ENCODE measurements at regions of chr11 and their contacts with region 1.

Region 1: DNA sequence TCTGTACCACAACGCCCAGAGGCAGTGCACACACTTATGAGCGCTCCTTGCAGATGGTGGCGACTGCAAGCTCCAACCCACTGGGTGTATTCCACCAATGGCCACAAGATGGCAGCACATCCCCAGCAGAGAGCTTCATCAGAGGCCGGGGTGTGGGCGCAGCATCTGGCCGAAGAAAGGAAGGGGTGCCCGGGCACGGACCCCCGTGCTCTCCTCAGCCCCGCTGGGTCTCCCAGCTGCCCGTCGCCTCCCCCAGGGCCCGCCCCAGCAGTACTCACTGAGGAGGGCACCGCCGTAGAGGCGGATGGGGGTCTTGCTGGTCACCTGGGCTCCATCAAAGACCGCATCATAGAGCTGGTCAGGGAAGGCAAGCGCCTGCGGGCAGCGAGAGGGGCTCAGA is 14.2 kb downstream of the TP53I11 start:
- DNase-seq: peak; percentile 91
- H3K4me3 ChIP-seq: peak overlapping the region in 1 of 2 experiments; percentile 44; a peak in 1 of 4 replicates
- H3K27ac ChIP-seq: no peak overlapping the region
- H3K4me1 ChIP-seq: peaks cover 0 to 6% of the 10 kb centered on the region in 2 experiments; a peak in 1 of 4 replicates
- H3K27me3 ChIP-seq: no peaks in the 10 kb centered on the region
- CTCF ChIP-seq: peak; percentile 89
- EP300 ChIP-seq: no peak
- RAD21 ChIP-seq: peak; percentile 95

Region 2: GRCh38 chr11:44957040-44957515 is 20.6 kb after region 1 on chr11:
- CTCF ChIA-PET with region 1: interaction called, 12 read pairs
- POLR2A ChIA-PET with region 1: no interaction called
- DNase-seq: no peak
- H3K4me3 ChIP-seq: no peak overlapping the region
- H3K27ac ChIP-seq: no peak overlapping the region
- H3K4me1 ChIP-seq: peaks cover 4% of the 10 kb centered on the region in 2 experiments; a peak in 2 of 4 replicates
- H3K27me3 ChIP-seq: no peaks in the 10 kb centered on the region
- CTCF ChIP-seq: no peak
- EP300 ChIP-seq: no peak
- RAD21 ChIP-seq: no peak

Region 3: GRCh38 chr11:45048870-45049691 is 112.6 kb after region 1 on chr11:
- CTCF ChIA-PET with region 1: interaction called, 28 read pairs
- POLR2A ChIA-PET with region 1: no interaction called
- DNase-seq: peak; percentile 79
- H3K4me3 ChIP-seq: no peak overlapping the region; a peak in 1 of 4 replicates
- H3K27ac ChIP-seq: peak overlapping the region in 1 of 2 experiments; percentile 61; a peak in 2 of 4 replicates
- H3K4me1 ChIP-seq: peaks cover 10 to 22% of the 10 kb centered on the region in 2 experiments
- H3K27me3 ChIP-seq: peaks cover 10% of the 10 kb centered on the region; the same call in 1 of the 2 replicates
- CTCF ChIP-seq: no peak
- EP300 ChIP-seq: peak in 1 of 2 experiments; percentile 92; a peak in 2 of 4 replicates
- RAD21 ChIP-seq: no peak; the same call in 1 of the 2 replicates

Region 4: DNA sequence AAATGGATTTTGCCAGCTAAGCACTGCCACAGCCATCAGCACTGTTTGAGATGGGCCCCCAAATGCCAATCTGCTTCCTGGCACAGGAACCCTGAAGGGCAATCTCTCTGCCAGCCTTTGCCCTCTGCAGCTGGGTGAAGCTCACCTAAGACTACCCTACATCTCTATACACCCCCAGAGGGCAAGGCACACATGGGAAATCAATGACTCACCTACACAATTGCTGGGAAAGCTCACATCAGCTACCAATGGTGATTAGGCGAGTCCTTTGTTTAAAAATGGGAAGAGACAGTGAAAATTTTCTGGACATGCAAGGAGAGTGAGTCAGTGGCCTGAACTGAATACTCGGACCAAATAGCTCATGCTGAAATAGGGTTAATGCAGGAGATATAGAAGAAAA is 197.3 kb after region 1 on chr11:
- CTCF ChIA-PET with region 1: interaction called, 10 read pairs
- POLR2A ChIA-PET with region 1: no interaction called
- DNase-seq: no peak
- H3K4me3 ChIP-seq: no peak overlapping the region
- H3K27ac ChIP-seq: no peak overlapping the region
- H3K4me1 ChIP-seq: no peaks in the 10 kb centered on the region
- H3K27me3 ChIP-seq: peaks cover 18% of the 10 kb centered on the region
- CTCF ChIP-seq: no peak
- EP300 ChIP-seq: no peak
- RAD21 ChIP-seq: no peak

Region 5: GRCh38 chr11:45332276-45332934 is 395.9 kb after region 1 on chr11:
- CTCF ChIA-PET with region 1: interaction called, 11 read pairs
- POLR2A ChIA-PET with region 1: no interaction called
- DNase-seq: peak; percentile 81
- H3K4me3 ChIP-seq: no peak overlapping the region
- H3K27ac ChIP-seq: no peak overlapping the region
- H3K4me1 ChIP-seq: peaks cover 4 to 13% of the 10 kb centered on the region in 2 experiments; a peak in 2 of 4 replicates
- H3K27me3 ChIP-seq: no peaks in the 10 kb centered on the region; the same call in none of the 2 replicates
- CTCF ChIP-seq: peak; percentile 68
- EP300 ChIP-seq: no peak
- RAD21 ChIP-seq: peak; percentile 77

Measured in SK-N-SH (cell line).